Transverse colon (tissue), 4 donors: ENCODE measurements at regions of chr3 and their contacts with region 1.

Region 1: DNA sequence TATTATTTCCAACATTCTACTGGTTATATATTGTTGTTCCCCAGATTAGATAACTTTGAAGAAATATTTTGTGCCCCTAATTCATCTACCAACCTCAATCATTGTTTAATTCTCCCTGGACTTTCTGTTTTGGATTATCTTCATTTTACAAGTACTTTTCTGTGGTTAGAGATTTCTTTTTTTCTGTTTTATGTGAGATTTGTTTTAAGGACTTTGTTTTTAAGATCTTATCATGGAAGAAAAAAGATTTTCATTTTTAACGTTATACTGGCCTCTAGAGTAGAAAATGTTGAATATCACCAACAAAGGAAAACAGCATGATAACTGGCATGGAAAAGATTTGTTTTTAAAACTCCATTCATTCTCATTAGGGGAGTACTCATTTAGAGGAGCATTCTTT is 210.9 kb upstream of the KCNMB2 start:
- DNase-seq: no peak
- H3K4me3 ChIP-seq: no peak overlapping the region
- H3K27ac ChIP-seq: no peak overlapping the region
- H3K4me1 ChIP-seq: peaks cover 3 to 21% (median 5%) of the 10 kb centered on the region in 4 donors
- H3K27me3 ChIP-seq: no peaks in the 10 kb centered on the region
- CTCF ChIP-seq: peak; percentile 31 to 50 (median 36)
- EP300 ChIP-seq: no peak
- POLR2A ChIP-seq: no peak

Region 2: GRCh38 chr3:177050501-177051237 is 1274.7 kb before region 1 on chr3:
- in situ Hi-C with region 1: loop called in 2 of 4 experiments (anchors 25 kb)
- intact Hi-C with region 1: no loop called
- DNase-seq: no peak
- H3K4me3 ChIP-seq: no peak overlapping the region
- H3K27ac ChIP-seq: peak overlapping the region; percentile 25 to 43 (median 33)
- H3K4me1 ChIP-seq: peaks cover 2 to 31% (median 6%) of the 10 kb centered on the region in 4 donors
- H3K27me3 ChIP-seq: no peaks in the 10 kb centered on the region
- CTCF ChIP-seq: peak; percentile 59 to 78 (median 61)
- EP300 ChIP-seq: no peak
- POLR2A ChIP-seq: no peak